Activated CD4-positive, alpha-beta memory T cell treated with anti-CD3 and anti-CD28 coated beads, Interleukin-2, amount 10 ng/mL, durations not matched to agents 7 days and 5 days (primary cell): ENCODE measurements at regions of chr17 and their contacts with region 1.

Region 1: GRCh38 chr17:47649153-47649971 is at the start of gene KPNB1:
- DNase-seq: peak; percentile 99
- H3K4me3 Mint-ChIP-seq: peak within 1 kb of the TSS; percentile 91
- H3K27ac Mint-ChIP-seq: peak within 1 kb of the TSS; percentile 96
- H3K4me1 Mint-ChIP-seq: peaks cover 50% of the 10 kb centered on the region
- H3K27me3 Mint-ChIP-seq: no peaks in the 10 kb centered on the region
- total RNA-seq, gene KPNB1: 329 to 334 TPM

Region 2: GRCh38 chr17:47376249-47376648 is 273.1 kb before region 1 on chr17:
- CTCF ChIA-PET with region 1: no interaction called
- POLR2A ChIA-PET with region 1: no interaction called
- DNase-seq: no peak
- H3K4me3 Mint-ChIP-seq: no peak overlapping the region
- H3K27ac Mint-ChIP-seq: no peak overlapping the region
- H3K4me1 Mint-ChIP-seq: no peaks in the 10 kb centered on the region
- H3K27me3 Mint-ChIP-seq: peaks cover 16% of the 10 kb centered on the region

Region 3: GRCh38 chr17:47615766-47616424 is 33.5 kb before region 1 on chr17:
- CTCF ChIA-PET with region 1: interaction called, 15 read pairs
- POLR2A ChIA-PET with region 1: interaction called, 14 read pairs
- DNase-seq: no peak
- H3K4me3 Mint-ChIP-seq: no peak overlapping the region
- H3K27ac Mint-ChIP-seq: peak overlapping the region; percentile 27
- H3K4me1 Mint-ChIP-seq: peaks cover 17% of the 10 kb centered on the region
- H3K27me3 Mint-ChIP-seq: no peaks in the 10 kb centered on the region

Region 4: DNA sequence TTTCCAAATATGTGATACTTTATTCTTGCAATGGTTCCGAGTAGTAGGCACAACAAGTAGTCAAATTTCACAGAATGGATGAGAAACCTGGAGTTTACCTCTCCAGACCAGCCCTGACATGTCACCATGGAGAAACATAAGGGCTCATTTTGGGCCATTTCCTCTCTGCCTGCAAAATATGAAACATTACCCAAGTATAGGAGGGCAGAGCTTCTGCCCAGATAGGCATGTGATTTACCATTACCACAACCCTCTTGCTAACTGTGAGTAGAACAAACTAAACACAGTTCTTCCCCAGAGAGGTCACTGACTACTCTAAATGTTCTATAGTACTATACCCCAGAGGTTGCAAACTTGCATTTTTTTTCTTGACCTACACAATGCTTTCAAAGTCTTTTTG is 15.4 kb before region 1 on chr17:
- CTCF ChIA-PET with region 1: interaction called, 5 read pairs
- POLR2A ChIA-PET with region 1: interaction called, 15 read pairs
- DNase-seq: no peak
- H3K4me3 Mint-ChIP-seq: no peak overlapping the region
- H3K27ac Mint-ChIP-seq: no peak overlapping the region
- H3K4me1 Mint-ChIP-seq: peaks cover 21% of the 10 kb centered on the region
- H3K27me3 Mint-ChIP-seq: no peaks in the 10 kb centered on the region

Region 5: GRCh38 chr17:47733047-47733673 is 83.8 kb after region 1 on chr17 and contains the start of gene TBX21:
- CTCF ChIA-PET with region 1: interaction called, 5 read pairs
- POLR2A ChIA-PET with region 1: interaction called, 38 read pairs
- DNase-seq: peak; percentile 94
- H3K4me3 Mint-ChIP-seq: peak within 1 kb of the TSS; percentile 100
- H3K27ac Mint-ChIP-seq: peak within 1 kb of the TSS; percentile 99
- H3K4me1 Mint-ChIP-seq: peaks cover 68% of the 10 kb centered on the region
- H3K27me3 Mint-ChIP-seq: no peaks in the 10 kb centered on the region
- total RNA-seq, gene TBX21: 58.3 to 61.1 TPM

Region 6: DNA sequence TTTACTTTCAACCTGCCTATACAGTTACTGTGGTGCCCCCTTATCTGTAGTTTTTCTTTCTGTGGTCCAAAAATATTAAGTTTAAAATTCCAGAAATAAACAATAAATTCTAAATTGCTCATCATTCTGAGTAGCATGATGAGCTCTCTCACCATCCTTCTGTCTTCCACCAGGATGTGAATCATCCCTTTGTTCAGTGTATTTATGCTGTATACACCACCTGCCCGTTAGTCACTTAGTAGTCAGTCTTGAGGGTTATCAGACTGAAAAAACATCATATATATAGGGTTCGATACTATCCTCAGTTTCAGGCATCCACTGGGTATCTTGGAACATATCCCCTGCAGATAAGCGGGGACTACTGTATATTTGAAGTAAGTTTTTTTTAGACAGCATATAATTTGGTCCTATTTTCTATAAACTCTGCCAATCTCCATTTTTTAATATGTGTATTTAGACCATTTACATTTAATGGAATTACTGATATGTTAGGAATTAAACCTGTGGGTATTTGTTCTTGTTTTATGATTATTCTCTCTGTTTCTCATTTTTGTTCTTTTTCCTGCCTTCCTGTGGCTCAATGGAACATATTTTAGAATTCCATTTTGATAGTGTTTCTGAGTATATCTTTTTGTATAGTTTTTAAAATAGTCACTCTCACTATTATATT is 114.7 kb after region 1 on chr17:
- CTCF ChIA-PET with region 1: no interaction called
- POLR2A ChIA-PET with region 1: no interaction called
- DNase-seq: no peak
- H3K4me3 Mint-ChIP-seq: no peak overlapping the region
- H3K27ac Mint-ChIP-seq: no peak overlapping the region
- H3K4me1 Mint-ChIP-seq: peaks cover 16% of the 10 kb centered on the region
- H3K27me3 Mint-ChIP-seq: peaks cover 17% of the 10 kb centered on the region